Naive thymus-derived CD8-positive, alpha-beta T cell (primary cell): ENCODE measurements at regions of chr9 and their contacts with region 1.

Region 1: GRCh38 chr9:127734747-127735529 is at the start of gene TOR2A:
- DNase-seq: peak; percentile 98 to 99 (median 99)
- ATAC-seq: peak; percentile 89 to 91
- H3K4me3 Mint-ChIP-seq: peak within 1 kb of the TSS; percentile 80 to 98 (median 96)
- H3K27ac Mint-ChIP-seq: peak within 1 kb of the TSS; percentile 82 to 98 (median 94)
- H3K4me1 Mint-ChIP-seq: peaks cover 9 to 20% (median 14%) of the 10 kb centered on the region in 4 donors
- H3K27me3 Mint-ChIP-seq: peaks cover 0 to 1% (median 0%) of the 10 kb centered on the region in 5 donors
- polyA plus RNA-seq, gene TOR2A: 18.1 to 24.7 (median 23.5) TPM

Region 2: GRCh38 chr9:127578955-127579853 is 155.7 kb before region 1 on chr9:
- POLR2A ChIA-PET with region 1: no interaction called
- DNase-seq: peak in 9 of 10 donors; percentile 14 to 76 (median 34)
- ATAC-seq: peak; percentile 99
- H3K4me3 Mint-ChIP-seq: peak overlapping the region in 5 of 10 donors; percentile 11 to 67 (median 43)
- H3K27ac Mint-ChIP-seq: peak overlapping the region in 7 of 10 donors; percentile 36 to 68 (median 60)
- H3K4me1 Mint-ChIP-seq: peaks cover 7 to 26% (median 13%) of the 10 kb centered on the region in 4 donors
- H3K27me3 Mint-ChIP-seq: no peaks in the 10 kb centered on the region

Region 3: GRCh38 chr9:127715394-127716337 is 19.3 kb before region 1 on chr9 and contains the starts of genes PTRH1 and TTC16:
- POLR2A ChIA-PET with region 1: interaction called, 19 read pairs
- DNase-seq: peak; percentile 93 to 98 (median 96)
- ATAC-seq: peak; percentile 94
- H3K4me3 Mint-ChIP-seq: peak within 1 kb of the TSS; percentile 90 to 100 (median 99)
- H3K27ac Mint-ChIP-seq: peak within 1 kb of the TSS; percentile 95 to 99 (median 98)
- H3K4me1 Mint-ChIP-seq: peaks cover 20 to 54% (median 42%) of the 10 kb centered on the region in 4 donors
- H3K27me3 Mint-ChIP-seq: no peaks in the 10 kb centered on the region
- polyA plus RNA-seq, gene PTRH1: 26.2 to 37.7 (median 30.9) TPM
- polyA plus RNA-seq, gene TTC16: 1.8 to 4.4 (median 3.0) TPM

Region 4: GRCh38 chr9:127869310-127870152 is 134.6 kb after region 1 on chr9:
- POLR2A ChIA-PET with region 1: interaction called, 19 read pairs
- DNase-seq: peak; percentile 55 to 88 (median 72)
- ATAC-seq: peak; percentile 48 to 79
- H3K4me3 Mint-ChIP-seq: no peak overlapping the region
- H3K27ac Mint-ChIP-seq: peak overlapping the region in 4 of 10 donors; percentile 43 to 67 (median 54)
- H3K4me1 Mint-ChIP-seq: peaks cover 13 to 22% (median 16%) of the 10 kb centered on the region in 4 donors
- H3K27me3 Mint-ChIP-seq: no peaks in the 10 kb centered on the region